ENCODE measurements at regions of chr2 and their contacts with region 1.

Region 1: GRCh38 chr2:202588647-202589581 is 45.9 kb upstream of the FAM117B start:
- DNase-seq: peak; percentile 62
- ATAC-seq: peak; percentile 99
- H3K4me3 ChIP-seq: no peak overlapping the region
- H3K27ac ChIP-seq: no peak overlapping the region
- H3K4me1 ChIP-seq: peaks cover 2% of the 10 kb centered on the region
- H3K27me3 ChIP-seq: no peaks in the 10 kb centered on the region
- CTCF ChIP-seq: peak; percentile 78
- POLR2A ChIP-seq: no peak
- RAD21 ChIP-seq: peak; percentile 83

Region 2: GRCh38 chr2:202009019-202009481 is 579.9 kb before region 1 on chr2:
- CTCF ChIA-PET with region 1: no interaction called
- POLR2A ChIA-PET with region 1: no interaction called
- dilution Hi-C with region 1: no loop called
- in situ Hi-C with region 1: no loop called
- intact Hi-C with region 1: no loop called
- DNase-seq: no peak
- ATAC-seq: peak; percentile 57
- H3K4me3 ChIP-seq: no peak overlapping the region
- H3K27ac ChIP-seq: no peak overlapping the region
- H3K4me1 ChIP-seq: peaks cover 8% of the 10 kb centered on the region
- H3K27me3 ChIP-seq: no peaks in the 10 kb centered on the region
- CTCF ChIP-seq: no peak
- POLR2A ChIP-seq: no peak
- RAD21 ChIP-seq: no peak

Region 3: DNA sequence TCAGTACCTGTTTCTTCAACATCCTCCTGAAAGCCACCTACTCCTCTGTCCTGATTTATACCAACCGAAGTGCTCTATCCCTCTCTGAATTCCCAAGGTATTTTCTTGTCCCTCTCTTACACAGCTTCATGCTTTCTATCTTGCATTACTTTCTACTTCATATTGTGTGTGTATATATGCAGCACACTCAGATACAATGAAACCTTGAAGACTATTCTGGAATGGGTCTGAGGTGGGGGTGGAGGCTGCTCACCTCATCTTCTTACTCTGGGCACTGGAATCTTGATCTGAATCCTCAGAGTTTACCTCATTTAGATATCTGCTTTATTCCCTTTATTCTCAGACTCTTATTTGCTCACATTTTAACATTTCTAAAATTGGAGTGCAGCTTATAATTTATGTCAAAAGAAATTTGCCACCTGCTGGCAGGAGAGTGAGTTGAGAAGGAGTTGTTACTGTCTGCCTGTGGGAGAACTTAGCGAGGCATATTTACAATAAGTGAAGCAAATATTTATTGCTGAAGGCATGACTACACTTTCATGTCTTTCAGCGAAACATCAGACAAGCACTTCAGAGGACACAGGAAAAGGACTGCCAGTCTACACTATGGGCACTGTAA is 532.4 kb before region 1 on chr2:
- CTCF ChIA-PET with region 1: no interaction called
- POLR2A ChIA-PET with region 1: no interaction called
- dilution Hi-C with region 1: no loop called
- in situ Hi-C with region 1: no loop called
- intact Hi-C with region 1: no loop called
- DNase-seq: peak; percentile 51
- ATAC-seq: peak; percentile 66
- H3K4me3 ChIP-seq: no peak overlapping the region
- H3K27ac ChIP-seq: no peak overlapping the region
- H3K4me1 ChIP-seq: peaks cover 3% of the 10 kb centered on the region
- H3K27me3 ChIP-seq: no peaks in the 10 kb centered on the region
- CTCF ChIP-seq: peak; percentile 49
- POLR2A ChIP-seq: no peak
- RAD21 ChIP-seq: peak; percentile 31; the same call in 1 of the 2 replicates

Region 4: DNA sequence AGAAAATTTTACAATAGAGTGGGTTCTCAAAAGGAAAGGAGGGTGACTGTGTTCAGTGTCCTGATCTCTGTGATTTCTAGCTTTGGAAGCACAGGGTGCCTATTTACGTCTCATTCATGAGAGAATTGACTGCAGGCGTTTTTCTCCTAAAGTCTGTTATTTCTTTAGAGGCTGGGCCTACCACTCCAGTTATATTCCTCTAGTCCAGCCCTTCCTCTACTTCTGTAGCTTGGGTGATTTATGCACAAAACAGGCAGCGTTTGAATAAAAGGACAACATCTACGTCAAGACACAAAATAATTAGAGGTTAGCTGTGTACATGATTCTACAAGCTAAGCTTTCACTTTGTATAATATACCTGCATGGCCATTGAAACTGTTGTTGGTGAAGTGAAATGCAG is 13.4 kb after region 1 on chr2:
- CTCF ChIA-PET with region 1: interaction called, 13 read pairs
- POLR2A ChIA-PET with region 1: no interaction called
- dilution Hi-C with region 1: no loop called
- in situ Hi-C with region 1: no loop called
- intact Hi-C with region 1: no loop called
- DNase-seq: no peak
- ATAC-seq: no peak
- H3K4me3 ChIP-seq: no peak overlapping the region
- H3K27ac ChIP-seq: no peak overlapping the region
- H3K4me1 ChIP-seq: no peaks in the 10 kb centered on the region
- H3K27me3 ChIP-seq: no peaks in the 10 kb centered on the region
- CTCF ChIP-seq: no peak
- POLR2A ChIP-seq: no peak
- RAD21 ChIP-seq: no peak

Region 5: GRCh38 chr2:202634556-202635427 is 45.9 kb after region 1 on chr2 and contains the start of gene FAM117B:
- CTCF ChIA-PET with region 1: no interaction called
- POLR2A ChIA-PET with region 1: no interaction called
- dilution Hi-C with region 1: no loop called
- in situ Hi-C with region 1: no loop called
- intact Hi-C with region 1: loop called (anchors 5 kb)
- DNase-seq: peak; percentile 92
- ATAC-seq: peak; percentile 97
- H3K4me3 ChIP-seq: peak within 1 kb of the TSS; percentile 96
- H3K27ac ChIP-seq: peak within 1 kb of the TSS; percentile 42
- H3K4me1 ChIP-seq: no peaks in the 10 kb centered on the region
- H3K27me3 ChIP-seq: no peaks in the 10 kb centered on the region
- CTCF ChIP-seq: no peak
- POLR2A ChIP-seq: no peak
- RAD21 ChIP-seq: no peak
- total RNA-seq, gene FAM117B: 0.54 and 1.1 TPM in 2 replicates

Region 6: DNA sequence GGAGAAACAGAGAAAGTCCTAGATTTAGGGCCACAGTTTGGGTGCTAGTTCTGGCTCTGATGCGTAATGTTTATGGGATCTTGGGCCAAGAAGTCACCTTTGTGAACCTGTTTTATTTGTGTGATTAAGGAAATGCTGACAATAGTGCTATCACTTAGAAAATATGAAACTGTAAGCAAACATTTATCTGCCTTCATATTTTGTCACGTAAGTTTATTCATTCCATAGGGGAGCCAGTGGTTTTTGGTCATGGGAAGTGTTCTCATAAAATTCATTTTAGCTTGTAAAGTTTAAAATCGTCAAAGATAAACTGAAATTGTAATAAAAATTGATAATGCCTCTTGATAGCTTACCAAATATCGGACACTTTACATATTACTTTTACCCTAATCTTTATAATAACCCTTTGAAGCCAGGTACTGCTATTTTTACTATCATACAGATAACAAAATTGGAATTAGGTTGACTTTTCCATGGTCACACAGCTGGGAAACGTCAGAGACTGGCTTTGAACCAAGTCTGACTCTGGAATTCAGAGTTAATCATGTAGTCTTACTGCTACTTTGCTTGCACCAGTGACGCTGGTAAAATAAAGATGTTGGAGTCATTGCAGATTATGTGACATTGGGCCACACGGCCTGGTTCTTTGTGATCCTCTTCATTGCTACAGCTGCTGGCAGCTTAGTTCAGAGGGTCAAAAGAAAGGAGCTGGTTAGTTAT is 183.0 kb after region 1 on chr2:
- CTCF ChIA-PET with region 1: no interaction called
- POLR2A ChIA-PET with region 1: no interaction called
- dilution Hi-C with region 1: no loop called
- in situ Hi-C with region 1: no loop called
- intact Hi-C with region 1: no loop called
- DNase-seq: peak; percentile 75
- ATAC-seq: peak; percentile 35
- H3K4me3 ChIP-seq: no peak overlapping the region
- H3K27ac ChIP-seq: no peak overlapping the region
- H3K4me1 ChIP-seq: 0 out of 2 replicates have a peak, but pooled peaks cover 1% of the 10 kb centered on the region
- H3K27me3 ChIP-seq: no peaks in the 10 kb centered on the region
- CTCF ChIP-seq: no peak
- POLR2A ChIP-seq: no peak
- RAD21 ChIP-seq: no peak

Region 7: DNA sequence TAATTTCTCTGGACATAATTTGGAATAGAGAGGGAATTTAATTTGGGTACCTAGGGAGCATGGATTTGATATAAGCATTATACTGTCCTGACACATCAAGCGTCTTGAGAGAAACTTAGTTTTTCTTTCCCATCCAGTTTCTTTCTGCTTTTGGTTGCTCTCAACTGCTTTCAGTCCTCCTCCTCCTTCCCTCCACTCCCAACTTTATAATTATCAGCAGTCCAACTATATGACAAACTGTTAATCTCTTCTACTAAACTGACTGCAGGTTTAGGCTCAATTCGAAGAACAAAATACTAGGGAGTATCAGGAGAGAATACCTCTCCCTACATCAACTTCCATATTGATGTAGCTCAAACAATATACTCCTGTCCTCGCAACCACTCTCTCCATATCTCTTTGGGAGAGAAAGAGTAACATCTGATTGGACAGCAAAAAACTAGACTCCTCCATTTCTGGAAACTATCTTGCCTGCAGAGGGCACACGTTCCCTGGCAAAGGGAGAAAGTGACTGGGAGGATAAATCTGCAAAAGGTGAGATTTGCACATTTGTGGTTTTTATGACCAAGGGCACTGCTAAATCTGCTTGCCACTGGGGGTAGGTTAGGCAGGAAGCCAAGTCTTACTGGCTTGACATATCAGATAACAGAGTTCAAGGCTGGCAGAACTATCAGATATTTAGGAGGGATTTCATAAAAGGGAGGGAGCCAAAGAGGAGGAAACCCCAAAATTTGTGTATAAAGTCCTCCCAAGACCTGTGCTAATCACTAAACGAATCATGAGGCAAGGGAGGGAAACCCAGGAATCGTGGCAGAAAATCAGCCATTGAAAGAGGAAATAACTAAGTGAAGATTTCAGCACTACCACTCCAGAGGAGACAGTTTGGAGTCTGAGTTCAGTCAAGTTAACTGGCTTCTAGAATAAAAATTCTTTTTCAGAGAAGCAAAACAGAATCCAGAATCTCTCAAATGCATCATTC is 242.6 kb after region 1 on chr2:
- CTCF ChIA-PET with region 1: no interaction called
- POLR2A ChIA-PET with region 1: no interaction called
- dilution Hi-C with region 1: no loop called
- in situ Hi-C with region 1: no loop called
- intact Hi-C with region 1: loop called (anchors 5 kb)
- DNase-seq: peak; percentile 61
- ATAC-seq: peak; percentile 92
- H3K4me3 ChIP-seq: no peak overlapping the region
- H3K27ac ChIP-seq: no peak overlapping the region
- H3K4me1 ChIP-seq: no peaks in the 10 kb centered on the region
- H3K27me3 ChIP-seq: no peaks in the 10 kb centered on the region
- CTCF ChIP-seq: peak; percentile 76
- POLR2A ChIP-seq: no peak
- RAD21 ChIP-seq: peak; percentile 86

Region 8: GRCh38 chr2:202870431-202871299 is 281.8 kb after region 1 on chr2:
- CTCF ChIA-PET with region 1: interaction called, 6 read pairs
- POLR2A ChIA-PET with region 1: no interaction called
- dilution Hi-C with region 1: no loop called
- in situ Hi-C with region 1: loop called (anchors 10 kb)
- intact Hi-C with region 1: loop called (anchors 1 kb)
- DNase-seq: peak; percentile 36
- ATAC-seq: peak; percentile 83
- H3K4me3 ChIP-seq: peak overlapping the region; percentile 91
- H3K27ac ChIP-seq: peak overlapping the region; percentile 39
- H3K4me1 ChIP-seq: no peaks in the 10 kb centered on the region
- H3K27me3 ChIP-seq: no peaks in the 10 kb centered on the region
- CTCF ChIP-seq: peak; percentile 39
- POLR2A ChIP-seq: no peak
- RAD21 ChIP-seq: peak; percentile 45

Region 9: GRCh38 chr2:202932425-202933138 is 343.7 kb after region 1 on chr2:
- CTCF ChIA-PET with region 1: no interaction called
- POLR2A ChIA-PET with region 1: no interaction called
- dilution Hi-C with region 1: no loop called
- in situ Hi-C with region 1: no loop called
- intact Hi-C with region 1: no loop called
- DNase-seq: peak; percentile 75
- ATAC-seq: peak; percentile 80
- H3K4me3 ChIP-seq: no peak overlapping the region
- H3K27ac ChIP-seq: no peak overlapping the region
- H3K4me1 ChIP-seq: 0 out of 2 replicates have a peak, but pooled peaks cover 1% of the 10 kb centered on the region
- H3K27me3 ChIP-seq: no peaks in the 10 kb centered on the region
- CTCF ChIP-seq: no peak
- POLR2A ChIP-seq: no peak
- RAD21 ChIP-seq: no peak

Region 10: DNA sequence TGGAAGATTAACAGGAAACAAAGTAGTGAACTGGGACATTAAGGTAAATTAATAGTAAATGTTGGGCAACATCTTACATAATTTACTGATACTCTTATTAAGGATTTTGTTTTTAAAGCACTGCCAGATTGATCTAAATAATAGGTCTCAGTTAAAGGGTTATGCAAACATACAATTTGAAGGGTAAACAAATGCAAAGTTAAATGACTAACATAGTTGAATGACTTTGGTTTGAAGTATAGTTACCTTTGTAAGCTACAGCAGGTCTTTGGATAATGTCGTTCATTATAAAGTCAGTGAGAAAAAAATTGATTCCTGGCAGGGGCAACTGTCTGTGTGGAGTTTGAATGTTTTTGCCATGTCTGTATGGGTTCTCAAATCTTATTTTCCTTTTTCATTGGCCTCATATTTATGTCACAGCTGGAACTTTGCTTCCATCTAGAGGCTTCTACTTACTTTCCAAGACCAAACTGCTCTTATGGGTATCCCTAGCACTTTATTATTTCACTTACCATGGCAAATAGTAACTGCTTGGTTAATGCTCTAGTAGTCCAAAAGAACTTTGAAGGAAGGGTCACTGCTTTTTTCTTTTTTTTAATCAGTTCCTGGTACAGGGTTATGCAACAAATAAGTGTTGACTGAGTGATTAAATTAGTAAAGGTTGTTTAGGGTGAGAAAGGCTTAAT is 533.5 kb after region 1 on chr2:
- CTCF ChIA-PET with region 1: interaction called, 3 read pairs
- POLR2A ChIA-PET with region 1: no interaction called
- dilution Hi-C with region 1: no loop called
- in situ Hi-C with region 1: no loop called
- intact Hi-C with region 1: loop called (anchors 10 kb)
- DNase-seq: peak; percentile 6
- ATAC-seq: no peak; the same call in 1 of the 2 replicates
- H3K4me3 ChIP-seq: no peak overlapping the region
- H3K27ac ChIP-seq: no peak overlapping the region
- H3K4me1 ChIP-seq: peaks cover 3% of the 10 kb centered on the region
- H3K27me3 ChIP-seq: no peaks in the 10 kb centered on the region
- CTCF ChIP-seq: no peak; the same call in 1 of the 2 replicates
- POLR2A ChIP-seq: no peak
- RAD21 ChIP-seq: peak; percentile 24; the same call in 1 of the 2 replicates

Region 11: GRCh38 chr2:203909261-203909967 is 1320.5 kb after region 1 on chr2:
- CTCF ChIA-PET with region 1: no interaction called
- POLR2A ChIA-PET with region 1: no interaction called
- dilution Hi-C with region 1: no loop called
- in situ Hi-C with region 1: loop called (anchors 25 kb)
- intact Hi-C with region 1: loop called (anchors 1 kb)
- DNase-seq: peak; percentile 80
- ATAC-seq: peak; percentile 94
- H3K4me3 ChIP-seq: peak overlapping the region; percentile 20; the same call in 1 of the 2 replicates
- H3K27ac ChIP-seq: peak overlapping the region; percentile 57; the same call in 1 of the 2 replicates
- H3K4me1 ChIP-seq: peaks cover 3% of the 10 kb centered on the region; the same call in 1 of the 2 replicates
- H3K27me3 ChIP-seq: no peaks in the 10 kb centered on the region; the same call in 1 of the 2 replicates
- CTCF ChIP-seq: peak; percentile 85
- POLR2A ChIP-seq: no peak
- RAD21 ChIP-seq: peak; percentile 85